ENCODE measurements at regions of chr19 and their contacts with region 1.

Region 1: GRCh38 chr19:56314562-56315077 is at the start of gene ZSCAN5A:
- H3K4me3 Mint-ChIP-seq: peak within 1 kb of the TSS; percentile 89
- H3K27ac Mint-ChIP-seq: peak within 1 kb of the TSS; percentile 99
- H3K4me1 Mint-ChIP-seq: peaks cover 63% of the 10 kb centered on the region
- H3K27me3 Mint-ChIP-seq: no peaks in the 10 kb centered on the region

Region 2: DNA sequence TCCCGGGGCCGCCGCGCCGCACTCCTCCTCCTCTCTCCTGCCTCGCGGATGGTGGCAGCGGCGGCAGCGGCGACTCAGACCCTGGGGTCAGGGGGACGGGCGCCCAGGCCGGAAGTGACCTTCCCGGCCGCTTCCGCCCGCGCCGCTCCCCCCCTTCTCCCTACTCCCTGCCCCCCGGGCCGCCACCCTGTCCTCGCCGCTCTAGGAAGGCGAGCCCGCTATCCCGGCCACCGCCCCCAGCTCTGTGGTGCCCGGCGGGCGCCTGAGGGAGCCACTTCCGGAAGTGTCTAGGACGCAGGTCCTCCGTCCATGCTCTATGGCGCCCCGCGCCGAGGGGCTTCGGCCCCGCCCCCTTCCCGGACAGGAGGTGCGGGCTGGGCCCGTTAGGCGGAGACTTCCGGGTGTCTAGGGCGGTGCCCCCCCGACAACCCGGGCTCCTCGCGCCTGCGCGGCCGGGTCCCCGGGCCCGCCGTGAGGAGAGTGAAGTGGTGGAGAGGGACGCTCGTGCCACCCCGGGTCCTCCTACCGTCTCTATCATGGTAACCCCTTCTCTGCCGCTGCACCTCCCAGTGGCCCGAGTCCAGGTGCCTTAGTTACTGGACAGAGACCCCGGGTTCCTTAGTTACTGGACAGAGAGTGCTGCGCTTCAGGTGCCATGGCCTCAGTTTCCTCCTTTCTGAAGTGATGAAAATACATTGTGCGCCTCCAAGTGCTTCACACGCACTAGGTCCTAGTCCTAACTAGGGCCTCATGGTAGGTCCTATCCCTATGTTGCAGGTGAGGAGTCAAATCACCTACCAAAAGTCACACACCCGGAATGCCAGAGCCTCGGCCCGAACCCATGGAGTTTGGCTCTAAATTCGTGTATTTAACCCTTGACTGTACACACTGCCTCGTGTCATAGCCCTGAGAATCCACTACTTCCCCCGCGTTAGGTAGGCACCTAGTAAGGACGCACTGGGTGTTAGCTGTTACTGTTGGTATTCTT is 193.1 kb before region 1 on chr19 and contains the start of gene ZNF787:
- intact Hi-C with region 1: loop called (anchors 1 kb)
- H3K4me3 Mint-ChIP-seq: peak within 1 kb of the TSS; percentile 95
- H3K27ac Mint-ChIP-seq: peak within 1 kb of the TSS; percentile 98
- H3K4me1 Mint-ChIP-seq: peaks cover 36% of the 10 kb centered on the region
- H3K27me3 Mint-ChIP-seq: no peaks in the 10 kb centered on the region

Region 3: GRCh38 chr19:56252699-56253422 is 61.8 kb before region 1 on chr19:
- intact Hi-C with region 1: loop called (anchors 10 kb)
- H3K4me3 Mint-ChIP-seq: no peak overlapping the region
- H3K27ac Mint-ChIP-seq: peak overlapping the region; percentile 24
- H3K4me1 Mint-ChIP-seq: no peaks in the 10 kb centered on the region
- H3K27me3 Mint-ChIP-seq: no peaks in the 10 kb centered on the region

Region 4: DNA sequence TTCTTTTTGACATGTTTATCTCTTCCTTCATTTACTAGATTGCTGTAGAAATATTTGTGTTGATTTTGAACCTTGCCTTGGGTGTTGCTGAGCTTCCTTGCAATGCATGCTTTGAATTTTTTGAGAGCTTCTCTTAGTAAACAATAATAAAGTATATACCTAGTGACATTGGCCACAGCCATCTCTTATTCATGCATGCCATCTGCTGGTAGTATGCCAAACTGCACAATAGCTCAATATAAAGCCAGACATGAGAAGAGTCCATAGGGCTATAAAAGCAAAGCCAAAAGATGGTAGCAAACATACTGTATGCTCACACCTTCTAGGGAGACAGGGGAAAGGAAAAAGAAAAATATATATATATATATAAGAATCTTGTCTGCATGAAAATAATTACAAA is 18.9 kb after region 1 on chr19:
- intact Hi-C with region 1: loop called (anchors 1 kb)
- H3K4me3 Mint-ChIP-seq: no peak overlapping the region
- H3K27ac Mint-ChIP-seq: no peak overlapping the region
- H3K4me1 Mint-ChIP-seq: no peaks in the 10 kb centered on the region
- H3K27me3 Mint-ChIP-seq: no peaks in the 10 kb centered on the region